ENCODE measurements at regions of chr12 and their contacts with region 1.

Region 1: DNA sequence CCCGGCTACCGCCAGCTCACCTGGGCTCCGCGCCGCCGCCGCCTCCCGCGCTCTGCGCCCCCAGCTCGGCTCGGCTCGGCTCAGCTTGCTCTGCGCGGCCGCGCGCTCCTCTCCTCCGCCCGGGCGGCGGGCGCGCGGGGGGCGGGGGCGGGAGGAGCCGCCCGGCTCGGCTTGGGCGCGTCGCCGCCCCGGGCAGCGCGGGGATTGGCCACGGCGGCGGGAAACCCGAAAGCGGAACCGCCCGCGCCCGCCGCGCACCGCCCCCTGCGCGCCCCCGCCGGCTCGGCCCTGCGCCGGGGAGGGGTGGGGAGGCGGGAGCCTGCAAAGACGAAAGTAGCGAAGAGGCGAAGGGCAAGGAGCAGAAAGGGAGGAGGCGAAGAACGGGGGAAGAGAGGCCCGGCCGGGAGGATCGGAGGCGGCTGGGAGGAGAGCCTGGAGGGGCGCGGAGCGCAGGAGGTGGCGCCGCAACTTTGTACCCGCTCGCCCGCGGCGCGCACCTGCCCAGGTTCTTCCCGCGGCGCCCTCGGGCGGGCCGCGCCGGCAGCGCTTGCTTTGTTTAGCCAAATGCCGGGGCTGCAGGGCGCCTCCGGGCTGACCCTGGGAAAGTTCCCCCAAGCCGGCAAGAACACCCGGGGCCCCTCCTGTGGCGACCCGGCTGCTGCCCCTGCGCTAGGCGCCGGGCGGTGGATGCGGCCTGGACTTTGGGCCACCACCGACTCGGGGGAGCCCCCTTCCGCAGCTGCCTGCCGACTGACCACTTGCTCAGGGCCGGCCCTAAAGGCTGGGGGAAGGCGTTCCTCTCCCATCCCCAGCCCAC is at the start of gene CAMKK2:
- DNase-seq: peak; percentile 44 to 90
- H3K4me3 ChIP-seq: peak within 1 kb of the TSS; percentile 95
- H3K27ac ChIP-seq: peak within 1 kb of the TSS; percentile 12; the same call in 1 of the 2 replicates
- H3K4me1 ChIP-seq: peaks cover 6% of the 10 kb centered on the region
- H3K27me3 ChIP-seq: no peaks in the 10 kb centered on the region
- CTCF ChIP-seq: no peak; the same call in 1 of the 2 replicates
- total RNA-seq, gene CAMKK2: 26.7 and 37.6 TPM in 2 replicates

Region 2: DNA sequence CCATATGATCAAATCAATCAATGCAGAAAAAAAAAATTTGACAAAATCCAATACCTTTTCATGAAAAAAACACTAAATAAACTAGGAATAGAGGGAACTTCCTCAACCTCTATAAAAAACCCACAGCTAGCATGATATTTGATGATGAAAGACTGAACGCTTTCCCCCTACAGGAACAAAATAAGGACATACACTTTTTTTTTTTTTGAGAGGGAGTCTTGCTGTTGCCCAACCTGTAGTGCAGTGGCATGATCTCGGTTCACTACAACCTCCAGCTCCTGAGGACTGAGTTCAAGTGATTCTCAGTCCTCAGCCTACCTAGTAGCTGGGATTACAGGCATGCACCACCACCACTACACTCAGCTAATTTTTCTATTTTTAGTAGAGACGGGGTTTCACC is 17.6 kb after region 1 on chr12:
- CTCF ChIA-PET with region 1: interaction called, 10 read pairs
- POLR2A ChIA-PET with region 1: no interaction called
- intact Hi-C with region 1: no loop called
- DNase-seq: no peak
- H3K4me3 ChIP-seq: no peak overlapping the region
- H3K27ac ChIP-seq: no peak overlapping the region
- H3K4me1 ChIP-seq: no peaks in the 10 kb centered on the region
- H3K27me3 ChIP-seq: no peaks in the 10 kb centered on the region
- CTCF ChIP-seq: no peak

Region 3: GRCh38 chr12:121508533-121508932 is 211.7 kb after region 1 on chr12:
- CTCF ChIA-PET with region 1: no interaction called
- POLR2A ChIA-PET with region 1: interaction called, 24 read pairs
- intact Hi-C with region 1: no loop called
- DNase-seq: no peak
- H3K4me3 ChIP-seq: no peak overlapping the region
- H3K27ac ChIP-seq: no peak overlapping the region
- H3K4me1 ChIP-seq: no peaks in the 10 kb centered on the region
- H3K27me3 ChIP-seq: no peaks in the 10 kb centered on the region
- CTCF ChIP-seq: no peak

Region 4: DNA sequence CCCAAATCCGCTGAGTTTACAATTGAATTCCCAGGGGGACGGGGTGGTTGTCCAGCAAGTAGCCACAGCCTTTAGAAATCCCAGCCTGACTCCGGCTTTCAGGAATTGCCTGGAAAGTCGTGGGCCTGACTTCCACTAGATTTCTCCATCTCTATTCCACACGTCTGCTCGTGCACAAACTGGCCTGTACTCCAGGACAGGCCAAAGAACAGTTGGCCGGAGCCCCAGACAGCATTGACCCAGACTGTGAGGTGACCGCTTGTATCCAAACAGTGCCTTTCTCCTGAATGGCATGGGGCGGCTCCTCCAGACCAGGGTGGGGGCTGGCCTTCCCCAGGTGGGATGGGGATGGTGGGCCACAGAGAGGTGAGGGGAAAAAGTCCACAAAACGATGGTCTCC is 221.8 kb after region 1 on chr12:
- CTCF ChIA-PET with region 1: no interaction called
- POLR2A ChIA-PET with region 1: no interaction called
- intact Hi-C with region 1: no loop called
- DNase-seq: no peak
- H3K4me3 ChIP-seq: no peak overlapping the region
- H3K27ac ChIP-seq: no peak overlapping the region
- H3K4me1 ChIP-seq: no peaks in the 10 kb centered on the region
- H3K27me3 ChIP-seq: no peaks in the 10 kb centered on the region
- CTCF ChIP-seq: no peak